BJ (cell line): ENCODE measurements at regions of chr16 and their contacts with region 1.

Region 1: DNA sequence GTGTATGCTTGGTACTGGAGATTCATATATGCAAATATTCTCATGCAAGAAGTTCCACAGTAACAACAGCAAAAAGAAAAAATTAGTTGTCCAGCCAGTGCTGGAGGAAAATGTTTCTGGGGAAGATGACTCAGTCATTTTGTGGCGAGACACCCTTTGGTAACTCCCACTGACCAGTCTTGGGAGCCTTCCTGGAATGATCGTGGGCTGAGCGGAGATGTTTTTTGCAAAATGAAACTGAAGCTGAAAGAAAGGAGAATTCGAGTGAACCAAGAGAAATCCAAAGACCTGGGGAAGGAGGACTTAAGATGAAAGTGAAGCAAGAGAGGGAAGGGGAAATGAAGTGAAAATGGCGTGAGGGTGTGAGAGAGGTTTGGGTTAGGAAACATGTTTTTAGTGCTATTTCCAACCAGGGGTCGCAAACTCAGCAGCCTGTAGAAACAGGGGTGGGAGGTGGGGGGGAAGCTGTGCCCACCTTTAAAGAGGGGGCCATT is 5.2 kb downstream of the ITPRIPL2 start:
- DNase-seq: peak; percentile 71
- H3K4me3 ChIP-seq: peak overlapping the region; percentile 54
- H3K27me3 ChIP-seq: no peaks in the 10 kb centered on the region
- CTCF ChIP-seq: no peak

Region 2: GRCh38 chr16:19001788-19002187 is 117.2 kb before region 1 on chr16:
- CTCF ChIA-PET with region 1: no interaction called
- POLR2A ChIA-PET with region 1: no interaction called
- DNase-seq: no peak
- H3K4me3 ChIP-seq: no peak overlapping the region
- H3K27me3 ChIP-seq: no peaks in the 10 kb centered on the region
- CTCF ChIP-seq: no peak

Region 3: GRCh38 chr16:19094541-19095365 is 24.2 kb before region 1 on chr16:
- CTCF ChIA-PET with region 1: interaction called, 3 read pairs
- POLR2A ChIA-PET with region 1: interaction called, 24 read pairs
- DNase-seq: no peak
- H3K4me3 ChIP-seq: no peak overlapping the region
- H3K27me3 ChIP-seq: no peaks in the 10 kb centered on the region
- CTCF ChIP-seq: no peak

Region 4: GRCh38 chr16:19523648-19524355 is 404.8 kb after region 1 on chr16 and contains the start of gene CCP110:
- CTCF ChIA-PET with region 1: no interaction called
- POLR2A ChIA-PET with region 1: interaction called, 13 read pairs
- DNase-seq: peak; percentile 77
- H3K4me3 ChIP-seq: peak within 1 kb of the TSS; percentile 90
- H3K27me3 ChIP-seq: no peaks in the 10 kb centered on the region
- CTCF ChIP-seq: no peak
- polyA plus RNA-seq, gene CCP110: 2.6 and 5.6 TPM in 2 replicates